Activated CD4-positive, alpha-beta memory T cell treated with anti-CD3 and anti-CD28 coated beads for 36 hours (primary cell): ENCODE measurements at regions of chr3 and their contacts with region 1.

Region 1: GRCh38 chr3:119676771-119677640 is at the start of gene COX17:
- DNase-seq: peak; percentile 98
- H3K4me3 Mint-ChIP-seq: peak within 1 kb of the TSS; percentile 95
- H3K27ac Mint-ChIP-seq: peak within 1 kb of the TSS; percentile 91
- H3K4me1 Mint-ChIP-seq: peaks cover 36% of the 10 kb centered on the region
- H3K27me3 Mint-ChIP-seq: no peaks in the 10 kb centered on the region
- total RNA-seq, gene COX17: 108 to 112 TPM

Region 2: GRCh38 chr3:118884748-118885206 is 792.2 kb before region 1 on chr3:
- CTCF ChIA-PET with region 1: interaction called, 43 read pairs
- POLR2A ChIA-PET with region 1: no interaction called
- intact Hi-C with region 1: loop called (anchors 2 kb)
- DNase-seq: peak; percentile 84
- H3K4me3 Mint-ChIP-seq: no peak overlapping the region
- H3K27ac Mint-ChIP-seq: no peak overlapping the region
- H3K4me1 Mint-ChIP-seq: no peaks in the 10 kb centered on the region
- H3K27me3 Mint-ChIP-seq: peaks cover 7% of the 10 kb centered on the region

Region 3: DNA sequence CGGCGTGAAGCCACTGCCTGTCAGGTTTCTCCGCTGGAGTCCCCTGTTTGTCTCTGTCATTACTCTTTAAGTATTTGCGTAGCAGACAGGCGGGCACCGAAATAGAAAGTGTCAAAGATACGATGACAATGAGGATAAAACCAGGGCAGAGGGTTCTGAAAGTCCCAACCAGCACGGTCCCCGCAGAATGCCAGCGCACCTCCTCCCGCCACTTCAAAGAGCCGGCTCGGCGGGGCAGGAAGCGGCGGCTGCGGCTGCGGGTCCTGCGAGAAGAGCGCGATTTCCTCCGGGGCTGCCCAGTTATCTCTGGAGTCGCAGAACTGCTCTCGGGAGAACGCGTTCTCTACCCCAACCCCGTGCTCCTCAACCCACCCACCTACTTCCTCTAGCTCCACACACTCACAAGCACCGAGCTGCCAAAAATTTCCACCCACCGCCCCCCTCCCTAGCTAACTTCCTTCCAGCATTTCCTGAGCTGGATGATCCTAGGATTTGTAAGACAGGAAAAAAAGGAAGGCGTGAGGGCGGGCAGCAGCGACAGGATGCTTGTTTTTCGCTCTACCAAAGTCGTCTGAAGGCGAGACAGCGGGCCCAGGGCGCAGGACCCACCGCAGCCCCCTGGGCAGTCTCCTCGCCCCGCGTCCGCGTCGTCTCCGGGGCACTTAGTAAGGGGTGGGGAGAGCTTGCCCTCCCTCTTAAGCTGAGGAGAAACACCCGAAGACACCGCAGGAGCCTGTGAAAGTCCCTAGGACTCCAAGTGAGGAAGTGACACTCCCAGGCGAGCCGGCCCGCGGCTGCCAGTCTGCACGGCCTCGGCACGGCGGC is 382.9 kb before region 1 on chr3 and contains the start of gene ARHGAP31:
- CTCF ChIA-PET with region 1: interaction called, 4 read pairs
- POLR2A ChIA-PET with region 1: interaction called, 8 read pairs
- intact Hi-C with region 1: loop called (anchors 1 kb)
- DNase-seq: peak; percentile 95
- H3K4me3 Mint-ChIP-seq: peak within 1 kb of the TSS; percentile 83
- H3K27ac Mint-ChIP-seq: peak within 1 kb of the TSS; percentile 93
- H3K4me1 Mint-ChIP-seq: peaks cover 44% of the 10 kb centered on the region
- H3K27me3 Mint-ChIP-seq: no peaks in the 10 kb centered on the region
- total RNA-seq, gene ARHGAP31: 10.8 to 11.4 TPM

Region 4: GRCh38 chr3:119469381-119470189 is 207.4 kb before region 1 on chr3:
- CTCF ChIA-PET with region 1: interaction called, 4 read pairs
- POLR2A ChIA-PET with region 1: interaction called, 15 read pairs
- intact Hi-C with region 1: loop called (anchors 1 kb)
- DNase-seq: no peak
- H3K4me3 Mint-ChIP-seq: peak overlapping the region; percentile 95
- H3K27ac Mint-ChIP-seq: peak overlapping the region; percentile 92
- H3K4me1 Mint-ChIP-seq: peaks cover 29% of the 10 kb centered on the region
- H3K27me3 Mint-ChIP-seq: no peaks in the 10 kb centered on the region

Region 5: DNA sequence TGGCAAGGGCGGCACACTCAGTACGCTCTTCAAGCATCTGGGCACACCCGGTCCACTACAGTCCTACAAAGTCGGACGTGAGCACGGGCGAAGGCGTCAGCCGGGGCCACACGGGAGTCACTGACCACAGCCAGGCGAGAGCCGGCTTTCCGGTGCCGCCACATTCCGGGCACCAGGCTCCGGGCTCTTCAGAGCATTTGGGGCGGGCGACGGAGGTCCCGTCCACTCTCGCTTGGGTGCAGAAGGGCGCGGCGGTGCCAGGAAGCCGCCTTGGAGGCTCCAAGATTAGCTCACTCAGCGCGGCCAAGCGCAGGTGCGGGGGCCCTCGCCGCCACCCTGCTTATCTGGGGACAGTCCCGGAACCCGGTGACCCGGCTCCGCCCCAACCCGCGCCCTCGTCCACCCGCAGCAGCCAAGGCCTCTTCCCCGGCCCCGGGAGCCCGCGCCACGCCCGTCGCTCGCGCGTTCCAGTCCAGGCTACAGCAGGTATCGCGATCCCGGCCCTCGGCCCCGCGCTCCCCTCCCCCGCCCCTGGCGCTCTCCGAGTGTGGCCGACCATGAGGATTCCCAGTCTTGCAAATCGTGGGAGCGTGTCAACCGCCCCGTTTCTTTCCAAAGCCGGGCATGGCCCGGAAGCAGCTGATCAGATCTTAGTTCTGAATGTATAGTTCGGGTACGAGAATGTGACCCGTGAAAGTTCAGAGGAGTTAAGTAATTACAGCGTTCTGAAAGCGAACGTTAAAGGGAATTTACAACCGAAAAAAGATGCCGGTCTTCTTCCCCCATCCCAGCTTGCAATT is 97.4 kb before region 1 on chr3 and contains the start of gene ADPRH:
- CTCF ChIA-PET with region 1: interaction called, 4 read pairs
- POLR2A ChIA-PET with region 1: interaction called, 13 read pairs
- intact Hi-C with region 1: loop called (anchors 1 kb)
- DNase-seq: peak; percentile 77
- H3K4me3 Mint-ChIP-seq: peak within 1 kb of the TSS; percentile 74
- H3K27ac Mint-ChIP-seq: peak within 1 kb of the TSS; percentile 61
- H3K4me1 Mint-ChIP-seq: peaks cover 26% of the 10 kb centered on the region
- H3K27me3 Mint-ChIP-seq: peaks cover 3% of the 10 kb centered on the region
- total RNA-seq, gene ADPRH: 7.7 to 8.6 TPM

Region 6: DNA sequence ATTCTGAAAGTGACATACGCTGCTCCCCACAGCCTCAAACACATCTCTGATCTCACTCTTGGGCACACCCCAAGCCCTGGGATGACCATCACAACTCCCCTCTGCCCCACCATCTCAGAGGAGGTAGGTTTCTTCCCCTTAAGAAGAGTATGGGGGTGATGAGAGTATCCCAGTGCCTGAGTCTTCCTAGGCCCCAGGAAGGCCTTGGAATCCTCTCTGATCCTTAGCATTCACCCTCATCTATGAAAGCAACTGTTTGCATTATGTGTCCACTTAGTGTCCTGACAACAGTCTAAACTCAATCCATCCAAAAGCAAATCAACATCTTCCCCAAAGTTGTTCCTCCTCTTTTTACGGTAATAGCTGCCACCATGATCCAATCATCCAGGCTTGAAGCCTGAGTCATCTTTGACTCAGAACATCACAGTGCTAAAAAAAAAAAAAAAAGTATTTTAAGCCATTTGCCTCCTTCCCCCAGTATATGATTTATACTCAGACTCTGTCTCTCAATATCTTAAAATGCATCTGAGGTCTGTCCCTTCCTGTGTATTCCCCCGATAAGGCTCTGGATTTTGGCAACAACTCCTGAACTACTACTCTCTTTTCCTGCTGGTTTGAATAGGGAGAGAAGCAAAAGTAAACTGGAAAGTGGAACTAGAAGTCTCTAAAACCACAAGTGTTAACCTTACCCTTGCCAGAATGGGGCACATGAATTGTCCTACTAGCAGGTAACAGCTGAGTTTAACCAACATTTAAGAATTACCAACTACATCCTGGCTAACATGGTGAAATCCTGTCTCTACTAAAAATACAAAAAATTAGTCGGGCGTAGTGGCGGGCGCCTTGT is 39.1 kb before region 1 on chr3:
- CTCF ChIA-PET with region 1: interaction called, 4 read pairs
- POLR2A ChIA-PET with region 1: interaction called, 6 read pairs
- intact Hi-C with region 1: loop called (anchors 1 kb)
- DNase-seq: no peak
- H3K4me3 Mint-ChIP-seq: no peak overlapping the region
- H3K27ac Mint-ChIP-seq: peak overlapping the region; percentile 92
- H3K4me1 Mint-ChIP-seq: peaks cover 45% of the 10 kb centered on the region
- H3K27me3 Mint-ChIP-seq: no peaks in the 10 kb centered on the region

Region 7: GRCh38 chr3:119834754-119835370 is 157.9 kb after region 1 on chr3:
- CTCF ChIA-PET with region 1: no interaction called
- POLR2A ChIA-PET with region 1: no interaction called
- intact Hi-C with region 1: no loop called
- DNase-seq: no peak
- H3K4me3 Mint-ChIP-seq: no peak overlapping the region
- H3K27ac Mint-ChIP-seq: no peak overlapping the region
- H3K4me1 Mint-ChIP-seq: peaks cover 10% of the 10 kb centered on the region
- H3K27me3 Mint-ChIP-seq: no peaks in the 10 kb centered on the region